Astrocyte of the spinal cord (primary cell): ENCODE measurements at regions of chr3 and their contacts with region 1.

Region 1: GRCh38 chr3:147391781-147392624 is 14.3 kb downstream of the ZIC4 start:
- DNase-seq: peak; percentile 95
- H3K4me3 ChIP-seq: peak overlapping the region; percentile 66
- CTCF ChIP-seq: peak; percentile 50

Region 2: DNA sequence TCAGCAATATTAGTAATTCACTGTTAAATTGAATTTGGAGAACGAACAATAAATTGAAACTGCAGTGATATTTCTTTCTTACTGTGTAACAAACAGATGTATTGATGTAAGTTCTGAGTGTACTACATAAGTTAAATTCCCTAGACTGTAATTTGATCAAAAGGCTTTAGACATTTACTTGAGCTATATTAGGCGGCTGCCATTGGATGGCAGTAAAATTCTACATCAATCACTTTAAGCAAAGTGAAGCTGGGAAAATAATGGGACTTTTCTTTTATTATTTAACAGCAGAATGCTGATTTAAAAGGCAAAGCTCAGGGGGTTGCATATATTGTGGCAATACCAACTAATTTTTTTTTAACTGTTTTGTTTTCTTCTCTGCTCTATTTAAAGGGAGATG is 574.3 kb before region 1 on chr3:
- in situ Hi-C with region 1: loop called (anchors 25 kb)
- DNase-seq: peak; percentile 88
- H3K4me3 ChIP-seq: no peak overlapping the region
- CTCF ChIP-seq: peak; percentile 55

Region 3: GRCh38 chr3:147130461-147130860 is 261.5 kb before region 1 on chr3:
- in situ Hi-C with region 1: no loop called
- DNase-seq: peak; percentile 26
- H3K4me3 ChIP-seq: no peak overlapping the region
- CTCF ChIP-seq: no peak

Region 4: GRCh38 chr3:147864754-147865354 is 472.9 kb after region 1 on chr3:
- in situ Hi-C with region 1: no loop called
- DNase-seq: peak; percentile 37
- H3K4me3 ChIP-seq: no peak overlapping the region
- CTCF ChIP-seq: no peak

Region 5: GRCh38 chr3:148075763-148076716 is 684.0 kb after region 1 on chr3:
- in situ Hi-C with region 1: loop called (anchors 25 kb)
- DNase-seq: peak; percentile 85
- H3K4me3 ChIP-seq: no peak overlapping the region
- CTCF ChIP-seq: peak; percentile 89